Ovary (tissue), 10 donors: ENCODE measurements at regions of chr16 and their contacts with region 1.

Region 1: DNA sequence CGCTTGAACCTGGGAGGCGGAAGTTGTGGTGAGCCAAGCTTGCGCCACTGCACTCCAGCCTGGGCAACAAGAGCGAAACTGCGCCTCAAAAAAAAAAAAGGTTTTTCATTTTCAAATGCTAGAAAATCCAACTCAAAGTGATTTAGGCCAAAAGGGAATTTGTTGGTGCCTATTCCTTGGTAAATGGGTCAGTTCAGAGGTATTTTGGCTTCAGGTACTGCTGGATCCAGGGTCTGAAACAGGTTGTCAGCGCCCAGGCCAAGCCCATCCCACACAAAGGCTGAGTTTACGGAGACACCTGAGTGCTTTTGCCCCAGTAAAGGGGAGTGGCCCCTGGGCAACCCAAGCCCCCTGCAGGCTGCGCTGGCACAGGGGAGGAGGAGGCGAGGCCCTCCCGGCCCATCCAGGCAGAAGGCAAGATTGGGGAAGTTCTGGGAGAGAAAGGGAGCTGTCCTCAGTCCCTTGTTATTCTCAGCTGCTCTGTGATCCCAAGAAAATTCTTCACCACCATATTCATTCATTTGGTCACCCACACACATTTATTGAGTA is 8.5 kb upstream of the JPH3 start:
- DNase-seq: no peak
- H3K4me3 ChIP-seq: no peak overlapping the region
- H3K27ac ChIP-seq: no peak overlapping the region
- H3K4me1 ChIP-seq: no peaks in the 10 kb centered on the region
- H3K27me3 ChIP-seq: no peaks in the 10 kb centered on the region
- CTCF ChIP-seq: no peak
- EP300 ChIP-seq: no peak
- POLR2A ChIP-seq: no peak

Region 2: DNA sequence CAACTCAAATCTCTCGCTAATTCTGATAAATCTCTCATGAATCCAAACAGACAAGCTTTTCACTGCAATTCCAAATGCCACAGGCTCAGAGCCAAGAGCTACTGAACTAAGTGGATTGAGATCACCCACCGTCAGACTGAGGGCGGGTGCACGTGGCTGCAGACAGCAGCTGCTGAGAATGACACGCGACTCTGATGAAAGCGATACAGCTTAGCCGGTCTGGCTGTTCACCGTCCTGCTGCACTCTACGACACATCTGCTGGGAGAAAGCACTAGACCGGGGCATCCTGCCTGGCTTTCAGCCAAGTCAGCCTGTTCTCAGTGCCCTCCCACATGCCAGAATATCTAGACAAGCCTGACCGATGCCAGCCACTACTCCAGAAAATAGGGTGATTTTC is 129.4 kb after region 1 on chr16:
- intact Hi-C with region 1: no loop called
- DNase-seq: peak in 1 of 5 donors; percentile 44
- H3K4me3 ChIP-seq: no peak overlapping the region
- H3K27ac ChIP-seq: no peak overlapping the region
- H3K4me1 ChIP-seq: no peaks in the 10 kb centered on the region
- H3K27me3 ChIP-seq: no peaks in the 10 kb centered on the region
- CTCF ChIP-seq: no peak
- EP300 ChIP-seq: no peak
- POLR2A ChIP-seq: no peak

Region 3: DNA sequence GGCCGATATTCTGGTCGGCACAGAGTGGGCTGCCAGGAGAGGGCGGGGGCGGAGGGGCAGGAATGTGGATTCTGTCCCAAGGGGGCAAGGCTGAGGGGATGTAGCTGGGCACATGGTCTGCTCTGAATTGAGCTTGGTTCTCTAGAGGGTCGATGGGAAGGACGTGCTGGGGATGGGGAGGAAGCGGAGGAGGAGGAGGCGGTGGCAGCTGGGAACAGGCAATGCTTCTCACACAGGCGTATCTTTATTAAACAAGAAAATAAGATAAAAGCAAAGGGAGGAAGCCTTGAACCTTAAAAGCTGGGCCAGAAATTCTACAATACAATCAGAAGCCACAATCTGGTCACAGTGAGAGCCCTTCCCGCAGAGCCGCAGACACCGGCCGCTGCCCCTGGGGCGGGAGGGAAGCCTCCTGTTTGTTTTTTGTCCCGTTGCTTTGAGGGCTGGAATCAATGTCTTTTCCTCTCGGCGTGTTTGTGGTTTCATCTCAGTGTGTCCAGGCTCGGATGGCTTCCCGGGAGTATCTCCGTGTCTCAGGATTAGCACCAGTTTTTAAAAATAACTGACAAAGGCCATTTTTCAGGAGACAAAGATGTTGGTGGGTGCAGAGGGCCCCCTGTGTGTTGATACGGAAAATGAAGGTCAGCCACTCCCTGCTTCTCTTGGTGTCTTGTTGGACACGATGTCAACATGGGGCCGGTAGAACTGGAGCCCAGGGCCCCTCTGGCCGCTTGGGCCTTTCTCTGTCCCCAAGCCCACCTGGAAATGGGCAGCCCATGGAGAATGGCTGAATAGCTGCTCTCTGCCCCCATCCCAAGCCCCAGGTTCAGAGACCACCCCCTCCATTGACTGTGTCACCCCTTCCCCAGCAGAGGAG is 287.8 kb after region 1 on chr16:
- intact Hi-C with region 1: loop called in 1 of 4 experiments (anchors 5 kb)
- DNase-seq: no peak
- H3K4me3 ChIP-seq: no peak overlapping the region
- H3K27ac ChIP-seq: no peak overlapping the region
- H3K4me1 ChIP-seq: peaks cover 2% of the 10 kb centered on the region
- H3K27me3 ChIP-seq: no peaks in the 10 kb centered on the region
- CTCF ChIP-seq: no peak
- EP300 ChIP-seq: no peak
- POLR2A ChIP-seq: no peak